Lower leg skin (tissue), 4 donors: ENCODE measurements at regions of chr4 and their contacts with region 1.

Region 1: GRCh38 chr4:99405433-99406115 is 29.6 kb downstream of the ADH7 start:
- DNase-seq: peak; percentile 80 to 87
- H3K4me3 ChIP-seq: no peak overlapping the region
- CTCF ChIP-seq: peak in 1 of 3 donors; percentile 93
- POLR2A ChIP-seq: no peak

Region 2: GRCh38 chr4:98995183-98996055 is 410.2 kb before region 1 on chr4 and contains the start of gene METAP1:
- intact Hi-C with region 1: loop called (anchors 10 kb)
- DNase-seq: peak; percentile 92 to 98
- H3K4me3 ChIP-seq: peak within 1 kb of the TSS; percentile 98
- CTCF ChIP-seq: peak in 1 of 3 donors; percentile 19
- POLR2A ChIP-seq: peak in 1 of 2 donors; percentile 5
- total RNA-seq, gene METAP1: 35.0 to 58.4 (median 39.8) TPM

Region 3: DNA sequence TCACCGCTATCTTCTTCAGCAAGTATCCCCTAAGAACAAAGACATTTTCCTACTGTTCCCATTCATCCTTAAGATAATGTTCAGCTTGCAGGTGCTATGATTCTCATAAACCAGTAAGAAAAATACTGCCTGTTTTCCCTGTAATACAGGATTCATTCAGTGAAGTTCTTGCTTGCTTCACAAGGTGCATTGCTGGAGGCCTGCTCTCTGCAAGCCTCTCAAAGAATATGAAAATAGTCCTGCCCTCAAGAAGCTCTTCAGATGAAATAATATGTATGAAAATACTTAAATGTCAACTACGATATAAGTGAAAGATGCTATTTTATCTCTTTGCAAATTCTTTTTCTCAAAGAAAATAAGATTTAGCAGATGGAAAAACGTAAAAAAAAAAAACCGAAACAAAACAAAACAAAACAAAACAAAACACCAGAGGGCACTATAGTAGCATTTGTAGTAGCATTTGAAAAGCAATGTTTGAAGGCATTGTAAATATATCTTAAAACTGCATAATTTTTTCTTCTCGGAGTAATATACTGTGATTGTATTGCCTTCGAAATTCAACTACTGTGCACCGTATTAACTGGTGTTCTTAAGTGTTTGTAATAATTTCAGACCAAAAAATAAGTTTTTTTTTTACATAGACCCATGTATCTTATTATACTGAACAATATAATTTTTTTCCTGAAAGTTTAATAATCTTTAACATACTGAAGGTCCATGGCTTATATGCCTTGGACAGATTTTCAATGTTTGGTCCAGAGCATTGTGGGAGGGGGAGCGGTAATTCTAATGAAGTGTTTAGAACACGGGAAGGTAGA is 287.5 kb before region 1 on chr4:
- intact Hi-C with region 1: loop called (anchors 10 kb)
- DNase-seq: no peak
- H3K4me3 ChIP-seq: no peak overlapping the region
- CTCF ChIP-seq: no peak
- POLR2A ChIP-seq: no peak

Region 4: GRCh38 chr4:99201690-99202089 is 203.9 kb before region 1 on chr4:
- intact Hi-C with region 1: loop called (anchors 5 kb)
- DNase-seq: no peak
- H3K4me3 ChIP-seq: no peak overlapping the region
- CTCF ChIP-seq: no peak
- POLR2A ChIP-seq: no peak